AG04449 (cell line): ENCODE measurements at regions of chrX and their contacts with region 1.

Region 1: GRCh38 chrX:56281789-56282188 is 49.6 kb downstream of the KLF8 start:
- DNase-seq: no peak
- H3K4me3 ChIP-seq: no peak overlapping the region
- CTCF ChIP-seq: no peak

Region 2: DNA sequence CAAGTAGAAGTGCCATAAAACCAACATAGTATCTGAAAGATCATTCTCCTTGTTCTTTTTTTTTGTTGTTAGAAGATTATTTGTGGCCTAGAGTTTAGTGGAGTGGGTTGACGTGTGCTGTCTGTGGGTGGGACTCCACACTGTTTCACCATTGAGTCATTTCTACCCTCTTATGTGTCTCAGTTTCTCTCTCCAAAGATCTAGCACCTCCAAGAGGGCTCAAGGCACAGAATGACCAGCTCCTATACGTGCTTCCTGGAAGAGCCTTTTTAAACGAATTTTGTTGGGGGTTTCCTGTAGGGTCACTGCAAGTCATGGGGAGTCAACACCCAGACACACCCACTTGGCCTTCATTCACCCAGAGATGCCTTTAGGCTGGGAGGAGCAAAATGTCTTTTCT is 100.5 kb after region 1 on chrX:
- CTCF ChIA-PET with region 1: no interaction called
- POLR2A ChIA-PET with region 1: no interaction called
- DNase-seq: no peak
- H3K4me3 ChIP-seq: no peak overlapping the region
- CTCF ChIP-seq: no peak

Region 3: GRCh38 chrX:56726605-56727004 is 444.8 kb after region 1 on chrX:
- CTCF ChIA-PET with region 1: interaction called, 37 read pairs
- POLR2A ChIA-PET with region 1: no interaction called
- DNase-seq: no peak
- H3K4me3 ChIP-seq: no peak overlapping the region
- CTCF ChIP-seq: peak; percentile 40

Region 4: GRCh38 chrX:56733459-56734046 is 451.8 kb after region 1 on chrX:
- CTCF ChIA-PET with region 1: interaction called, 37 read pairs
- POLR2A ChIA-PET with region 1: no interaction called
- DNase-seq: no peak
- H3K4me3 ChIP-seq: no peak overlapping the region
- CTCF ChIP-seq: peak; percentile 30